ENCODE measurements at regions of chr5 and their contacts with region 1.

Region 1: GRCh38 chr5:55172051-55172899 is 702 bp downstream of the CDC20B start:
- DNase-seq: peak; percentile 73
- H3K4me3 ChIP-seq: peak overlapping the region; percentile 30 to 46 (median 44)
- H3K27ac ChIP-seq: no peak overlapping the region
- H3K4me1 ChIP-seq: peaks cover 2 to 30% (median 28%) of the 10 kb centered on the region in 4 donors
- H3K27me3 ChIP-seq: peaks cover 32 to 78% (median 36%) of the 10 kb centered on the region in 3 donors
- CTCF ChIP-seq: peak; percentile 51 to 85 (median 70)
- EP300 ChIP-seq: no peak
- POLR2A ChIP-seq: no peak

Region 2: GRCh38 chr5:55134053-55134722 is 38.1 kb before region 1 on chr5:
- intact Hi-C with region 1: no loop called
- DNase-seq: no peak
- H3K4me3 ChIP-seq: no peak overlapping the region
- H3K27ac ChIP-seq: no peak overlapping the region
- H3K4me1 ChIP-seq: no peaks in the 10 kb centered on the region
- H3K27me3 ChIP-seq: no peaks in the 10 kb centered on the region
- CTCF ChIP-seq: no peak
- EP300 ChIP-seq: no peak
- POLR2A ChIP-seq: no peak

Region 3: DNA sequence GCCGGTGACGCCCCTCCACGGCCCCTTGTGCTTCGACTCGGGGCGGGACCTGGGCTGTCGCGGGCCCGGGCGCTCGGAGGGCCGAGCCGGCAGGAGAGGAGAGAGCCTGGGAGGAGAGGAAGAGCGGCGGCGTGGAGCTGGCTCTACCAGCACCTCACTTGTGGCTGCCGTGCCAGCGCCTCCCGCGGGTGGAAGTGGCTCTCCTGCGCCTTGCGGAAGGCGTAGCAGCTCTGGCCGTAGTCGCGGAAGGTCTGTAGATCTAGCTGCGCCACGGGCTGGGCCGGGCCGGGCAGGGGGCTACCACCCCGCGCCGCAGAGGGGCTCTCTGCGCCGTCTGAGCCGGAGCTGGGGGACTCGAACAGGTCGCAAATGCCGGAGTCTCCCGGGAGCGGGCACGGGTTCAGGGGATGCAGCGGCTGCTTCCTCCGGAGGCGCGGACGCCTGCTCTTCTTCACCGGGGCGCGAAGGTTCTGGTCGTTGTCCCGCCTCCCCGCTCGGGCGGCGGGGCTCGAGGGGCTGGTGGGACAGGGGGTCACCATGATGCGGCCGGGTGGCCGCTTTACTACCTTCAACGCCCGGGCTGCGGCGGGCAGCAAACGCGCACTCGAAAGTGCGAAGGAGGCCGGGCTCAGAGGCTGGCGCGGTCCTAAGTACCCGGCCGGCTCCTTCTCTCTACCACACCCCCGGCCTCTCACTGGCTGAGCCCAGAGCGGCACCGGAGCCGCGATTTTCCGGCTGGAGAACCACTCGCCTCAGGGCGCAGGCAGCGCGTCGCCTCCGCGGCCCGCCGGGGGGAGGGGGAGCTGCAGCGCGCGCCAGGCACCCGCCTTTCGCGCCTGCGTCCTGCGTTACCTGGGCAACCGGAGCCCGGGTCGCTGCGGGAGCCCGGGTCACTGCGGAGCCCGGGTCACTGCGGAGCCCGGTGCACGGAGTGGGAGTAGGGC is 61.0 kb after region 1 on chr5 and contains the start of gene CCNO:
- intact Hi-C with region 1: loop called (anchors 2 kb)
- DNase-seq: peak; percentile 71
- H3K4me3 ChIP-seq: peak within 1 kb of the TSS; percentile 29 to 57 (median 48)
- H3K27ac ChIP-seq: no peak within 1 kb of the TSS
- H3K4me1 ChIP-seq: peaks cover 0 to 37% (median 34%) of the 10 kb centered on the region in 4 donors
- H3K27me3 ChIP-seq: peaks cover 46 to 89% (median 75%) of the 10 kb centered on the region in 3 donors
- CTCF ChIP-seq: no peak
- EP300 ChIP-seq: no peak
- POLR2A ChIP-seq: no peak
- total RNA-seq, gene CCNO: not detected

Region 4: GRCh38 chr5:55307383-55308253 is 135.3 kb after region 1 on chr5 and contains the starts of genes DHX29 and MTREX:
- intact Hi-C with region 1: loop called (anchors 5 kb)
- DNase-seq: peak; percentile 96
- H3K4me3 ChIP-seq: peak within 1 kb of the TSS; percentile 69 to 91 (median 78)
- H3K27ac ChIP-seq: peak within 1 kb of the TSS; percentile 95 to 96 (median 95)
- H3K4me1 ChIP-seq: peaks cover 0 to 78% (median 63%) of the 10 kb centered on the region in 4 donors
- H3K27me3 ChIP-seq: no peaks in the 10 kb centered on the region
- CTCF ChIP-seq: no peak
- EP300 ChIP-seq: peak in 1 of 4 donors; percentile 60
- POLR2A ChIP-seq: peak; percentile 46 to 48
- total RNA-seq, gene DHX29: 28.8 to 34.2 (median 31.9) TPM
- total RNA-seq, gene MTREX: 59.0 to 76.7 (median 66.6) TPM

Region 5: GRCh38 chr5:55711968-55712859 is 539.9 kb after region 1 on chr5 and contains the start of gene SLC38A9:
- intact Hi-C with region 1: loop called (anchors 5 kb)
- DNase-seq: peak; percentile 97
- H3K4me3 ChIP-seq: peak within 1 kb of the TSS; percentile 78 to 92 (median 82)
- H3K27ac ChIP-seq: peak within 1 kb of the TSS; percentile 73 to 79 (median 78)
- H3K4me1 ChIP-seq: peaks cover 0 to 17% (median 15%) of the 10 kb centered on the region in 4 donors
- H3K27me3 ChIP-seq: no peaks in the 10 kb centered on the region
- CTCF ChIP-seq: no peak
- EP300 ChIP-seq: no peak
- POLR2A ChIP-seq: peak in 1 of 2 donors; percentile 15
- total RNA-seq, gene SLC38A9: 12.5 to 56.5 (median 21.9) TPM

Measured in sigmoid colon (tissue), 7 donors.